Activated B cell treated with CpG ODN at 0.5 μM for 24 hours (primary cell): ENCODE measurements at regions of chr3 and their contacts with region 1.

Region 1: DNA sequence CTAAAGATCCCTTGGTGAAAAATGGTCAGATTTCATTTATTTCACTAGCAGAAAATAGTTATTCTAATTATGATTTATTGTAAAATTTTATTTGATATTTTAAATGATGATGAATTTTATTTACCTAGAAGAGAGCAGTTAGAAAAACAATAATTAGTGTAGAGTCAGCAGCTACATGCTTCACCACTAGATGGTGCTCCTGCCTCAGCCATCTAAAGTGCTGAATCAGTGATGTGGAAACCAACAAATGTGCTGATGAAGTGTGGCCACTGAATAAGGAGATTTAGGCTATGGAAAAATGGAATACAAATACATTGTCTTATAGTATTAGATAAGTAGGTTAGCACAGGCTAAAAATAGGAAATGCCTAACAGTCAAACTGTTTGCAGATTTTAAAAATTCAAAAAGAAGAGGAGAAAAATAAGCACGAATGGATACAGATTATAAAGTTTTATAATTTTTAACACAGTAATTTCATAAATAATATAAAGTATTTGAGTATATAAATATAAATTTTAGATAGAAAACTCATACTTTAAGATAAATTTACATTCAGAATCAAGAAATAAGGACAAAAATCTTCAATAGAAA is 109.8 kb downstream of the PPP2R3A start:
- DNase-seq: peak; percentile 36
- ATAC-seq: peak; percentile 54
- H3K4me3 Mint-ChIP-seq: no peak overlapping the region
- H3K27ac Mint-ChIP-seq: no peak overlapping the region
- H3K4me1 Mint-ChIP-seq: peaks cover 2% of the 10 kb centered on the region
- H3K27me3 Mint-ChIP-seq: peaks cover 3% of the 10 kb centered on the region
- CTCF ChIP-seq: peak; percentile 98

Region 2: DNA sequence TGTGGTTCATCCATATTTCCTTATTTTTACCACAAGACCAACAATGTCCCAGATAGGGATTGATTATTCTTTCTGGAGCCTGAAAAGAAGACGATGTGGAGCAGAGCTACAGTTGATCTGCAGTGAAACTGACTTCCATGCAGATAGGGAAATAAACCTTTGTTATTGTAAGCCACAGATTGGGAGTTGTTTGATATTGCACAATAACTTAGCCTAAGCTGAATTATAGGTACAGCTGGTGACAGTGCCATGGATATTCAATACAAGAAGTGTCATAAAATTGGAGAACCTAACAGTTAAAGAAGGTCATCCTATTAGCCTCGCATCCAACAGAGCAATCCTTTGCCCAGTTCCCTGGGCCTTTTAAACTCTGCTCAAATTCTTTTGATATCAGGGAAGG is 477.5 kb before region 1 on chr3:
- CTCF ChIA-PET with region 1: no interaction called
- POLR2A ChIA-PET with region 1: no interaction called
- intact Hi-C with region 1: no loop called
- DNase-seq: no peak
- ATAC-seq: no peak
- H3K4me3 Mint-ChIP-seq: no peak overlapping the region
- H3K27ac Mint-ChIP-seq: no peak overlapping the region
- H3K4me1 Mint-ChIP-seq: no peaks in the 10 kb centered on the region
- H3K27me3 Mint-ChIP-seq: peaks cover 10% of the 10 kb centered on the region
- CTCF ChIP-seq: no peak

Region 3: GRCh38 chr3:136036306-136036705 is 39.0 kb before region 1 on chr3:
- CTCF ChIA-PET with region 1: no interaction called
- POLR2A ChIA-PET with region 1: no interaction called
- intact Hi-C with region 1: no loop called
- DNase-seq: no peak
- ATAC-seq: no peak
- H3K4me3 Mint-ChIP-seq: no peak overlapping the region
- H3K27ac Mint-ChIP-seq: no peak overlapping the region
- H3K4me1 Mint-ChIP-seq: no peaks in the 10 kb centered on the region
- H3K27me3 Mint-ChIP-seq: peaks cover 28% of the 10 kb centered on the region
- CTCF ChIP-seq: no peak

Region 4: DNA sequence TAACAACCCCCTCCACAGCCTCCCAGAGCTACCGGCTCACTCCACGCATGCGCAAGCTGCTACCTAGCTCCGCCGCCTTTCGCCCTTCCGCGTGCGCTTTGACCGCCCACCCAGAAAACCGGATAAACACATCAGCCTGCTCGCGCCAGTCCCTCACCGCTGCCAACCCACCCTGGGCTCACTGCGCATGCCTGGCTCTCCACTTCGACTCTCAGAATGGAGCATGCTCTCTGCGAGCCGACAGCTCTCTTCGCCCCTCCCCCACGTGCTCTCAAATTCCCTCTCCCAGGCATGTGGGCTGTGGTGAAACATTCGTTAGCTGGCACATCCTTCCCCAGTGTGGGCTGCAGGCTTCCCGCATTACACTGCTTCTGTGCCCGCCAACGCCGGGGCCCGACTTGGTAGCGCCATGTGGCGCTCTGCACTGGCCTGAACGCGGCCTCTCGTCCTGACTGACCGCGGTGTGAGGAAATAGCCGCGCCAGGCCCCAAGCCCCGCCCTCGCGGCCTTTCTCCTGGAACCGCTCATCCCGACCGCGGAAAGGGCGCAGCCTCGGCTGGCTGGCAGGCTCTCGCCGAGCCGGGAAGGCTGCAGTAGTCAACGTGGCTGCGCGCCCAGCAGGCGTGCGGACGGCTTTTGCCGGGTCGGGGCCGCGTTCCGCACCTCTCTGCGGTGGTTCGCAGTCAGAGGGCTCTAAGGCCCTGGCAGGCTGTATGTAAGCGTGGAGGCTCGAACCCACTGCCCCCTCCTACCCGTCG is 121.3 kb after region 1 on chr3:
- CTCF ChIA-PET with region 1: interaction called, 4 read pairs
- POLR2A ChIA-PET with region 1: interaction called, 6 read pairs
- intact Hi-C with region 1: loop called (anchors 2 kb)
- DNase-seq: peak; percentile 95
- ATAC-seq: peak; percentile 75
- H3K4me3 Mint-ChIP-seq: peak overlapping the region; percentile 99
- H3K27ac Mint-ChIP-seq: peak overlapping the region; percentile 94
- H3K4me1 Mint-ChIP-seq: peaks cover 47% of the 10 kb centered on the region
- H3K27me3 Mint-ChIP-seq: no peaks in the 10 kb centered on the region
- CTCF ChIP-seq: no peak

Region 5: GRCh38 chr3:136311975-136312374 is 236.7 kb after region 1 on chr3:
- CTCF ChIA-PET with region 1: no interaction called
- POLR2A ChIA-PET with region 1: no interaction called
- intact Hi-C with region 1: loop called (anchors 5 kb)
- DNase-seq: no peak
- ATAC-seq: no peak
- H3K4me3 Mint-ChIP-seq: no peak overlapping the region
- H3K27ac Mint-ChIP-seq: no peak overlapping the region
- H3K4me1 Mint-ChIP-seq: no peaks in the 10 kb centered on the region
- H3K27me3 Mint-ChIP-seq: no peaks in the 10 kb centered on the region
- CTCF ChIP-seq: no peak

Region 6: GRCh38 chr3:136350132-136350531 is 274.8 kb after region 1 on chr3:
- CTCF ChIA-PET with region 1: interaction called, 4 read pairs
- POLR2A ChIA-PET with region 1: no interaction called
- intact Hi-C with region 1: loop called (anchors 5 kb)
- DNase-seq: no peak
- ATAC-seq: no peak
- H3K4me3 Mint-ChIP-seq: no peak overlapping the region
- H3K27ac Mint-ChIP-seq: no peak overlapping the region
- H3K4me1 Mint-ChIP-seq: peaks cover 3% of the 10 kb centered on the region
- H3K27me3 Mint-ChIP-seq: no peaks in the 10 kb centered on the region
- CTCF ChIP-seq: no peak

Region 7: DNA sequence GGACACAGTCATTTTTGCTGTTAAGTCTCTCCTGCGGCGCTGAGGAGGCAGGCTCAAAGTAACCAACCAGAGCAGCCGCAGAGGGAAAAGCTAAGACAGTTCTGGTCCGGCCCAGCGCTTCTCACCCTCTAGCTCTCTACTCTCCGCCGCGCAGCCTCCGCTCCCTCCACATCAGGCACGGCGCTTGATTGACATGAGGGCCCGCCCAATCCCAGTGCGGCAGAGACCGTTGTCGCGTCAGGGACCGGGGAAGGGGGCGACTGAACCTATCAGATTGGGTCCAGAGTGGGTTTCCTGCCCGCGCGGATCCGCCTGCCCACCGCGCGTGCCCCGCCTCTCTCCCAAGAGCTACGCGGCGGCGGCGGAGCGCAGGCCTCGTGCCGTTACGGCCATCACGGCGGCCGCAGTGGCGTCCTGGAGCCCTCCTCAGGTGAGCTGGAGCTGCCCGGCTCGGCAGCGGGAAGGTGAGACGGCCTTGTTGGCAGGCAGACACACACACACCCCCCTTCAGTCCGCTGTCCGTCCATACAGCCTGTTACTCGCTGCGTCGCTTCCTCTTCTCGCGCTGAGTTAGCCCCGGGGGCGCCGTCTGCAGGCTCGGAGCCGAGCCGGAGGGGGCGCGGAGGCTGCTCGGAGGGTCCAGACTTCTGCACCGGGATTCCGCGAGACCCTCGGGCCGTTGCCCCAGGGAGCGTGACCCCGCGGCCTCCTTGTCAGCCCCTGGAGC is 786.7 kb after region 1 on chr3 and contains the start of gene NCK1:
- CTCF ChIA-PET with region 1: no interaction called
- POLR2A ChIA-PET with region 1: no interaction called
- intact Hi-C with region 1: loop called (anchors 2 kb)
- DNase-seq: peak; percentile 92
- ATAC-seq: peak; percentile 94
- H3K4me3 Mint-ChIP-seq: peak within 1 kb of the TSS; percentile 93
- H3K27ac Mint-ChIP-seq: peak within 1 kb of the TSS; percentile 95
- H3K4me1 Mint-ChIP-seq: peaks cover 43% of the 10 kb centered on the region
- H3K27me3 Mint-ChIP-seq: no peaks in the 10 kb centered on the region
- CTCF ChIP-seq: no peak
- total RNA-seq, gene NCK1: 29.7 and 30.8 TPM in 2 replicates

Region 8: GRCh38 chr3:137032465-137033120 is 957.3 kb after region 1 on chr3:
- CTCF ChIA-PET with region 1: interaction called, 7 read pairs
- POLR2A ChIA-PET with region 1: no interaction called
- intact Hi-C with region 1: loop called (anchors 5 kb)
- DNase-seq: peak; percentile 61
- ATAC-seq: peak; percentile 85
- H3K4me3 Mint-ChIP-seq: peak overlapping the region; percentile 68
- H3K27ac Mint-ChIP-seq: no peak overlapping the region
- H3K4me1 Mint-ChIP-seq: peaks cover 7% of the 10 kb centered on the region
- H3K27me3 Mint-ChIP-seq: peaks cover 32% of the 10 kb centered on the region
- CTCF ChIP-seq: peak; percentile 97

Region 9: GRCh38 chr3:137946345-137946973 is 1871.1 kb after region 1 on chr3:
- CTCF ChIA-PET with region 1: interaction called, 3 read pairs
- POLR2A ChIA-PET with region 1: no interaction called
- intact Hi-C with region 1: loop called (anchors 1 kb)
- DNase-seq: no peak
- ATAC-seq: no peak
- H3K4me3 Mint-ChIP-seq: no peak overlapping the region
- H3K27ac Mint-ChIP-seq: no peak overlapping the region
- H3K4me1 Mint-ChIP-seq: peaks cover 2% of the 10 kb centered on the region
- H3K27me3 Mint-ChIP-seq: no peaks in the 10 kb centered on the region
- CTCF ChIP-seq: no peak